Calu3 (cell line): ENCODE measurements at regions of chr9 and their contacts with region 1.

Region 1: DNA sequence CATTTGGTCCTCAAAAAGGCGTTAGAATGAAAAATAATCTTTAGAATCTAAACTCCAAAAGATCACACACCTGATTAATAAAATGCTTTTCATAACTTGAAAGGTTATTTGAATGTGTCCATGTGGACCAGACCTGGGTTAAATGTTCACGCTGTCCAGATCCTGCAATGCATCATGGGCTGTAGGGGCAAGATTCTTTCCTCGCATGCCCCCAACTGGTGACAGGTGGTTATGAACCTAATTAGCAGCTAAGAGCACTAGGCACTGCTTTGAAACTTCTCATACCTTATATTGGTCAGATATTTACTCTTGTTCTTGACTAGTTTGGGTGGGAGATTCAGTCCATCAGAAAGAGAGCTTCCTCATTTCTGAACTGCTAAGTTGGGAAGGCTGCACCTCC is 19.3 kb upstream of the PIP5K1B start:
- DNase-seq: peak; percentile 58
- H3K4me3 Mint-ChIP-seq: no peak overlapping the region
- H3K27ac Mint-ChIP-seq: no peak overlapping the region
- H3K4me1 Mint-ChIP-seq: peaks cover 12% of the 10 kb centered on the region
- H3K27me3 Mint-ChIP-seq: no peaks in the 10 kb centered on the region
- CTCF ChIP-seq: no peak

Region 2: GRCh38 chr9:68714416-68715180 is 28.8 kb after region 1 on chr9:
- CTCF ChIA-PET with region 1: no interaction called
- intact Hi-C with region 1: no loop called
- DNase-seq: no peak
- H3K4me3 Mint-ChIP-seq: no peak overlapping the region
- H3K27ac Mint-ChIP-seq: no peak overlapping the region
- H3K4me1 Mint-ChIP-seq: no peaks in the 10 kb centered on the region
- H3K27me3 Mint-ChIP-seq: no peaks in the 10 kb centered on the region
- CTCF ChIP-seq: no peak

Region 3: GRCh38 chr9:68999393-69000105 is 313.8 kb after region 1 on chr9:
- CTCF ChIA-PET with region 1: interaction called, 3 read pairs
- intact Hi-C with region 1: loop called (anchors 10 kb)
- DNase-seq: peak; percentile 66
- H3K4me3 Mint-ChIP-seq: no peak overlapping the region
- H3K27ac Mint-ChIP-seq: no peak overlapping the region
- H3K4me1 Mint-ChIP-seq: no peaks in the 10 kb centered on the region
- H3K27me3 Mint-ChIP-seq: no peaks in the 10 kb centered on the region
- CTCF ChIP-seq: peak; percentile 72